Naive thymus-derived CD4-positive, alpha-beta T cell (primary cell): ENCODE measurements at regions of chr12 and their contacts with region 1.

Region 1: GRCh38 chr12:21501379-21501956 is at the starts of genes GOLT1B and RECQL:
- DNase-seq: peak; percentile 67 to 96 (median 94)
- ATAC-seq: peak; percentile 98
- H3K4me3 ChIP-seq: peak within 1 kb of the TSS; percentile 68
- H3K4me3 Mint-ChIP-seq: no peak within 1 kb of the TSS
- H3K27ac ChIP-seq: peak within 1 kb of the TSS; percentile 87
- H3K27ac Mint-ChIP-seq: no peak within 1 kb of the TSS
- H3K4me1 ChIP-seq: peaks cover 20 to 25% of the 10 kb centered on the region in 2 donors
- H3K4me1 Mint-ChIP-seq: peaks cover 30 to 67% (median 55%) of the 10 kb centered on the region in 7 donors
- H3K27me3 ChIP-seq: no peaks in the 10 kb centered on the region
- H3K27me3 Mint-ChIP-seq: no peaks in the 10 kb centered on the region
- total RNA-seq, gene GOLT1B: 25.8 to 42.5 (median 31.7) TPM
- total RNA-seq, gene RECQL: 19.4 to 77.7 (median 43.2) TPM

Region 2: GRCh38 chr12:21438643-21439042 is 62.8 kb before region 1 on chr12:
- CTCF ChIA-PET with region 1: no interaction called
- POLR2A ChIA-PET with region 1: interaction called, 25 read pairs
- intact Hi-C with region 1: loop called (anchors 1 kb)
- DNase-seq: no peak
- ATAC-seq: no peak
- H3K4me3 ChIP-seq: peak overlapping the region; percentile 91
- H3K4me3 Mint-ChIP-seq: peak overlapping the region; percentile 94 to 99 (median 98)
- H3K27ac ChIP-seq: peak overlapping the region; percentile 81
- H3K27ac Mint-ChIP-seq: peak overlapping the region; percentile 92 to 99 (median 97)
- H3K4me1 ChIP-seq: peaks cover 11 to 22% of the 10 kb centered on the region in 2 donors
- H3K4me1 Mint-ChIP-seq: peaks cover 32 to 72% (median 49%) of the 10 kb centered on the region in 7 donors
- H3K27me3 ChIP-seq: no peaks in the 10 kb centered on the region
- H3K27me3 Mint-ChIP-seq: peaks cover 0 to 10% (median 0%) of the 10 kb centered on the region in 5 donors

Region 3: GRCh38 chr12:21476949-21477348 is 24.5 kb before region 1 on chr12:
- CTCF ChIA-PET with region 1: no interaction called
- POLR2A ChIA-PET with region 1: interaction called, 4 read pairs
- intact Hi-C with region 1: loop called in 1 of 2 experiments (anchors 2 kb)
- DNase-seq: no peak
- ATAC-seq: no peak
- H3K4me3 ChIP-seq: no peak overlapping the region
- H3K4me3 Mint-ChIP-seq: no peak overlapping the region
- H3K27ac ChIP-seq: no peak overlapping the region
- H3K27ac Mint-ChIP-seq: peak overlapping the region in 3 of 9 donors; percentile 39 to 73 (median 46)
- H3K4me1 ChIP-seq: no peaks in the 10 kb centered on the region
- H3K4me1 Mint-ChIP-seq: peaks cover 0 to 15% (median 0%) of the 10 kb centered on the region in 7 donors
- H3K27me3 ChIP-seq: no peaks in the 10 kb centered on the region
- H3K27me3 Mint-ChIP-seq: no peaks in the 10 kb centered on the region

Region 4: GRCh38 chr12:21527451-21528180 is 26.1 kb after region 1 on chr12:
- CTCF ChIA-PET with region 1: no interaction called
- POLR2A ChIA-PET with region 1: interaction called, 6 read pairs
- intact Hi-C with region 1: loop called (anchors 1 kb)
- DNase-seq: peak; percentile 33 to 69 (median 61)
- ATAC-seq: peak; percentile 95
- H3K4me3 ChIP-seq: peak overlapping the region; percentile 63
- H3K4me3 Mint-ChIP-seq: peak overlapping the region; percentile 69 to 87 (median 80)
- H3K27ac ChIP-seq: no peak overlapping the region
- H3K27ac Mint-ChIP-seq: no peak overlapping the region
- H3K4me1 ChIP-seq: peaks cover 0 to 3% of the 10 kb centered on the region in 2 donors
- H3K4me1 Mint-ChIP-seq: peaks cover 0 to 13% (median 8%) of the 10 kb centered on the region in 7 donors
- H3K27me3 ChIP-seq: no peaks in the 10 kb centered on the region
- H3K27me3 Mint-ChIP-seq: peaks cover 18 to 54% (median 37%) of the 10 kb centered on the region in 5 donors

Region 5: GRCh38 chr12:22046090-22046967 is 544.9 kb after region 1 on chr12 and contains the start of gene CMAS:
- CTCF ChIA-PET with region 1: no interaction called
- POLR2A ChIA-PET with region 1: interaction called, 5 read pairs
- intact Hi-C with region 1: loop called (anchors 1 kb)
- DNase-seq: peak; percentile 49 to 76 (median 65)
- ATAC-seq: peak; percentile 93
- H3K4me3 ChIP-seq: peak within 1 kb of the TSS; percentile 82
- H3K4me3 Mint-ChIP-seq: peak within 1 kb of the TSS; percentile 80 to 99 (median 94)
- H3K27ac ChIP-seq: peak within 1 kb of the TSS; percentile 82
- H3K27ac Mint-ChIP-seq: peak within 1 kb of the TSS; percentile 35 to 95 (median 89)
- H3K4me1 ChIP-seq: peaks cover 10 to 15% of the 10 kb centered on the region in 2 donors
- H3K4me1 Mint-ChIP-seq: peaks cover 27 to 65% (median 48%) of the 10 kb centered on the region in 7 donors
- H3K27me3 ChIP-seq: no peaks in the 10 kb centered on the region
- H3K27me3 Mint-ChIP-seq: no peaks in the 10 kb centered on the region
- total RNA-seq, gene CMAS: 10.1 to 33.6 (median 19.4) TPM

Region 6: DNA sequence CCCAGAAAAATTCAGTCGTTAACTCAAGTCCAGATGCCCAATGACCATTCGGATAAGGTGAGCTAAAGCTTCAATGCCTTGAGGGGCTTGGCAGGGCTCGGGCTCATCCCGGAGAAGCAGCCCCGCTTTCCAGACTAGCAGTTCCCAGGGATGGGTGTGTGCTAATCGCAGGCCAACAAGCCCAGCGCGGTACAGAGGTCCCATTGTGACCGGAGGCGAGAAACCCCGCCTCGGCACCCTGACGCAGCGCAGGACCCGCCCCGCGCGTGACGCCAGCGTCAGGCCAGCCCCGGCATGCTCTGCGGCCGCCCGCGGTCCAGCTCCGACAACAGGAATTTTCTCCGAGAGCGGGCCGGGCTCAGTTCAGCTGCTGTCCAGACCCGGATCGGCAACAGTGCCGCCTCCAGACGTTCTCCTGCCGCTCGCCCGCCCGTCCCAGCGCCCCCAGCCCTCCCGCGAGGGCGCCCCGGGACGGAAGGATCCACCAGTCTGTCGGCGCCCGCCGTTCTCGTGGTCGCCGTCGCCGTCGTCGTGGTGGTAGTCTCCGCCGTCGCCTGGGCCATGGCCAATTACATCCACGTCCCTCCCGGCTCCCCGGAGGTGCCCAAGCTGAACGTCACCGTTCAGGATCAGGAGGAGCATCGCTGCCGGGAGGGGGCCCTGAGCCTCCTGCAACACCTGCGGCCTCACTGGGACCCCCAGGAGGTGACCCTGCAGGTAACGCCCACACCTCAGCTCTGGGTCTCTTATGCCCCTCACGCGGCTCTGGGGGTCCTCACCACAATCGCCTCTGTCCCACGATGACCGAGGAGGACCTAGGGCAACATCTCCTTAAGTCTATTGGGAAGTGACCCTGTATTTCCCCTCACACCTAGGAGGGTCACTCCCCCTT is 1123.6 kb after region 1 on chr12 and contains the start of gene ETNK1:
- CTCF ChIA-PET with region 1: no interaction called
- POLR2A ChIA-PET with region 1: no interaction called
- intact Hi-C with region 1: loop called (anchors 2 to 10 kb)
- DNase-seq: peak; percentile 72 to 88 (median 77)
- ATAC-seq: peak; percentile 99
- H3K4me3 ChIP-seq: peak within 1 kb of the TSS; percentile 80
- H3K4me3 Mint-ChIP-seq: peak within 1 kb of the TSS; percentile 85 to 100 (median 96)
- H3K27ac ChIP-seq: peak within 1 kb of the TSS; percentile 88
- H3K27ac Mint-ChIP-seq: peak within 1 kb of the TSS; percentile 84 to 99 (median 97)
- H3K4me1 ChIP-seq: peaks cover 17 to 20% of the 10 kb centered on the region in 2 donors
- H3K4me1 Mint-ChIP-seq: peaks cover 23 to 50% (median 45%) of the 10 kb centered on the region in 7 donors
- H3K27me3 ChIP-seq: no peaks in the 10 kb centered on the region
- H3K27me3 Mint-ChIP-seq: peaks cover 0 to 25% (median 9%) of the 10 kb centered on the region in 5 donors
- total RNA-seq, gene ETNK1: 43.7 to 88.6 (median 77.9) TPM